H1 (cell line): ENCODE measurements at regions of chr11 and their contacts with region 1.

Region 1: GRCh38 chr11:19777377-19778102 is 64.9 kb downstream of the NAV2 start:
- DNase-seq: no peak
- H3K4me3 ChIP-seq: peak overlapping the region; percentile 84 to 96 (median 90)
- H3K27ac ChIP-seq: peak overlapping the region; percentile 92
- H3K4me1 ChIP-seq: peaks cover 17 to 43% (median 37%) of the 10 kb centered on the region in 4 experiments
- H3K27me3 ChIP-seq: no peaks in the 10 kb centered on the region
- CTCF ChIP-seq: no peak
- EP300 ChIP-seq: peak in 1 of 2 experiments; percentile 7; a peak in 1 of 3 replicates
- POLR2A ChIP-seq: peak; percentile 78 to 81
- RAD21 ChIP-seq: no peak

Region 2: DNA sequence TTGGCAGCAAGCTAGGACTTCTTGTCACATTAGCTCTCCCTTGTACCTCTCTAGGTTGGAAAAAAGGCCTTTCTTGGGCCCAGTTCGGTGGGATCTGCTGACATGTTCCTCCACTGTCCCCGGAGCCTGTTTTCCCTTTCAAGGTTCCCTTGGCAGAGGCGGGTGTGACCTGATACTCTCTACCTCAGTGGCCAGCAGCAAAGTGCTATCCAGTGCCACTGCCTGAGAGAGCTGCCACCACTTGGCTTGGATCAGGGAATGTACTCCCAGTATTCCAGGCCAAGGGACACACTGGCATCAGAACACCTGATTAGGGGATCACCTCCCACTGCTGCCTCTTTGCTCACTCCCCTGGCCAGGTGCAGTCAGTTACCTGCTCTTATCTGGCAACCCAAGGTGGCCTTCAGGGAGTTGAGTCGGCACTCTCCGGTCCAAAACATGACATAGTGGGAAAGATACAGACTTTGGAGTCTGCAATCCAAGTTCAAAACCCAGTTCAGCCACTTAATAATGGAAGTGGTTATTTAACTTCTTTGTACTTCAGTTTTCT is 82.7 kb before region 1 on chr11:
- CTCF ChIA-PET with region 1: no interaction called
- POLR2A ChIA-PET with region 1: no interaction called
- DNase-seq: no peak
- H3K4me3 ChIP-seq: no peak overlapping the region
- H3K27ac ChIP-seq: no peak overlapping the region
- H3K4me1 ChIP-seq: peaks cover 0 to 11% (median 6%) of the 10 kb centered on the region in 4 experiments; a peak in 5 of 7 replicates
- H3K27me3 ChIP-seq: no peaks in the 10 kb centered on the region; a peak in 1 of 7 replicates
- CTCF ChIP-seq: no peak
- EP300 ChIP-seq: no peak
- POLR2A ChIP-seq: no peak
- RAD21 ChIP-seq: no peak

Region 3: GRCh38 chr11:19766206-19766605 is 11.3 kb before region 1 on chr11:
- CTCF ChIA-PET with region 1: interaction called, 10 read pairs
- POLR2A ChIA-PET with region 1: interaction called, 3 read pairs
- DNase-seq: no peak
- H3K4me3 ChIP-seq: no peak overlapping the region
- H3K27ac ChIP-seq: no peak overlapping the region
- H3K4me1 ChIP-seq: peaks cover 1 to 18% (median 6%) of the 10 kb centered on the region in 4 experiments; a peak in 5 of 7 replicates
- H3K27me3 ChIP-seq: no peaks in the 10 kb centered on the region
- CTCF ChIP-seq: no peak
- EP300 ChIP-seq: no peak
- POLR2A ChIP-seq: no peak
- RAD21 ChIP-seq: no peak

Region 4: GRCh38 chr11:19868281-19868821 is 90.8 kb after region 1 on chr11:
- CTCF ChIA-PET with region 1: no interaction called
- POLR2A ChIA-PET with region 1: no interaction called
- DNase-seq: no peak
- H3K4me3 ChIP-seq: no peak overlapping the region
- H3K27ac ChIP-seq: no peak overlapping the region
- H3K4me1 ChIP-seq: peaks cover 7 to 34% (median 30%) of the 10 kb centered on the region in 4 experiments
- H3K27me3 ChIP-seq: no peaks in the 10 kb centered on the region
- CTCF ChIP-seq: no peak
- EP300 ChIP-seq: no peak
- POLR2A ChIP-seq: no peak
- RAD21 ChIP-seq: no peak